AG04449 (cell line): ENCODE measurements at regions of chr4 and their contacts with region 1.

Region 1: GRCh38 chr4:54440394-54441136 is 211.5 kb downstream of the PDGFRA start:
- DNase-seq: no peak
- H3K4me3 ChIP-seq: no peak overlapping the region
- CTCF ChIP-seq: peak; percentile 47

Region 2: GRCh38 chr4:54384563-54384962 is 56.0 kb before region 1 on chr4:
- CTCF ChIA-PET with region 1: interaction called, 56 read pairs
- POLR2A ChIA-PET with region 1: no interaction called
- DNase-seq: no peak
- H3K4me3 ChIP-seq: no peak overlapping the region
- CTCF ChIP-seq: peak; percentile 62

Region 3: GRCh38 chr4:54423066-54423465 is 17.5 kb before region 1 on chr4:
- CTCF ChIA-PET with region 1: interaction called, 11 read pairs
- POLR2A ChIA-PET with region 1: no interaction called
- DNase-seq: no peak
- H3K4me3 ChIP-seq: no peak overlapping the region
- CTCF ChIP-seq: no peak